Right lobe of liver (tissue), 6 donors: ENCODE measurements at regions of chr1 and their contacts with region 1.

Region 1: GRCh38 chr1:161229896-161230295 is 4.0 kb downstream of the TOMM40L start:
- DNase-seq: no peak
- ATAC-seq: no peak
- H3K4me3 ChIP-seq: no peak overlapping the region
- H3K27ac ChIP-seq: no peak overlapping the region
- H3K4me1 ChIP-seq: peaks cover 0 to 28% (median 5%) of the 10 kb centered on the region in 4 donors
- H3K27me3 ChIP-seq: no peaks in the 10 kb centered on the region
- CTCF ChIP-seq: no peak
- POLR2A ChIP-seq: no peak

Region 2: DNA sequence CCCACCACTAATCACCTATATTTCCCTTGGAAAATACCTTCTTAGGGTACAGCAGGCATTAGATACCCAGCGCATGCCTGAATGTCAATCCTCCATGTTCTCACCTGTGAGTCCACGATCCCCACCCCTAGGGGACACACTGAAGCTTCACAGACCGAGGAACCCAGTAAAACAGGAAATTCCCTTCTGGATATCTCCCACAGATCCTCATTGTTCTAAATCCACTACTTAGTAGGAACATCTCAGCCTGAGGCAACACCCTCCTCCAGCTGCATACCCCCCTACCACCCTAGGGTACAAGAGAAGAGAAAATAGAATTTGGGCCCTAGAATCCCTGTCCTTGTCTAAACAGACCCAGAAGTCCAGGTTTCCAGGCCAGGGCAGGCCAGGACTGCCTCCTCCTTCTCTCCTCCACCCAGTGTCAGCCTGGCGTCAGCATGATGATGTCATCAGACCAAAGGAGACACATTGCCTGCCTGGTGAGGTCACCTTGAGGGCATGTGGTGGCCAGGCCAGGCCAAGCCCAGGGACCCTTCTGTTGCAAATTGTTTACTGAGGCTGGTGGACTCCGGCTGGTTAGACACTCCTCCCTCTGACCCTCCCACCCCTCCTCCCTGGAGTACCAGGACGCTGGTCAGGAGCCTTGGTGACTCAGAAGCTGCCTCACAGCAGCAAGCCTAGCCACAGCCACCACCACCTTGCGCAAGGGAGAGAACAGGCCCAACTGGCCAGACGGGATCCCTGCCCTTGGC is 146.7 kb before region 1 on chr1:
- intact Hi-C with region 1: no loop called
- DNase-seq: peak in 1 of 3 donors; percentile 70
- ATAC-seq: peak; percentile 40 to 90 (median 60)
- H3K4me3 ChIP-seq: no peak overlapping the region
- H3K27ac ChIP-seq: no peak overlapping the region
- H3K4me1 ChIP-seq: no peaks in the 10 kb centered on the region
- H3K27me3 ChIP-seq: no peaks in the 10 kb centered on the region
- CTCF ChIP-seq: no peak
- POLR2A ChIP-seq: no peak

Region 3: DNA sequence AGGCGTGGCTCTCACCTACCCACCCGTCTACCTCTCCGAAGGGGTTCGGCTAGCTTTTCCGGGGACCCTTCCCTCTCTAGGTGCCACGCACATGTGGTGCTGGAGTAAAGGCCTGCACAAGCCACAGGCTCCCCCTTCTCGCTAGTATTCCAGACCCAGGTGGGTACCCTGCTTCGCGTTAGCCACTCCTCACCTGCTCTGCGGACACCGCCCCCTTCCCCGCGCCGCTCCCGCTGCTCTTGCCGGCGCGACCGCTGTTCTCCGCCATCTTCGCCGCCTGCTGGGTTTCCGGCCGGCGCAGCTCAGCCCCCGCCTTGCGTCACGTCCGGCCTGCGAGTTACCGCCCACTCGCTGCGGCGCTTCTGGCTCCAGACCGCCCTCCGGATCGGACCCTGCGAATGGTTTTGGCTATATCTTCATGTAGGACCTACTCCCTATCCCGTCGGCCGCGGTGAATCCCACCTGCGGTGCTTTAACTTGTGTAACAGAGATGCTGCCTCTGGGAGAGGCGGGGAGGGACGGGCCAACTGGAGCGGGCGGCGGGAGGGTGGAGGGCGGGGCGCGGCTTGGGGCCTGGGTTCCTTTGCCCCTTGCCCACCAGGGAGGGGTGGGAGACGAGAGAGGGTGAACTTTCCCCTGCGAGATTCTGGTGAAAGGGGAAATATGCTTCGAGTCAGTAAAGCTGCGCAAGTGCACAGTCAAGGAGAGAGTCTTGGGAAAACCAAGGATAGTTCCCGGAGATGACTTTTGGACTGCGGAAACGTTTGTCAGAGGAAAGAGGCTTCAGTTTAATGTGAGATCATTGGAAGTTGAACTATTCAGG is 111.9 kb before region 1 on chr1 and contains the starts of genes NIT1 and PFDN2:
- intact Hi-C with region 1: no loop called
- DNase-seq: peak; percentile 91 to 92 (median 91)
- ATAC-seq: peak; percentile 86 to 90 (median 88)
- H3K4me3 ChIP-seq: peak within 1 kb of the TSS; percentile 89 to 100 (median 99)
- H3K27ac ChIP-seq: peak within 1 kb of the TSS; percentile 88 to 95 (median 90)
- H3K4me1 ChIP-seq: peaks cover 0 to 50% (median 19%) of the 10 kb centered on the region in 4 donors
- H3K27me3 ChIP-seq: no peaks in the 10 kb centered on the region
- CTCF ChIP-seq: no peak
- POLR2A ChIP-seq: peak; percentile 96
- total RNA-seq, gene NIT1: 36.9 to 67.8 (median 45.8) TPM
- total RNA-seq, gene PFDN2: 16.6 to 37.5 (median 25.8) TPM

Region 4: GRCh38 chr1:161159087-161159912 is 70.6 kb before region 1 on chr1 and contains the start of gene USP21:
- intact Hi-C with region 1: no loop called
- DNase-seq: peak; percentile 94 to 96 (median 94)
- ATAC-seq: peak; percentile 96 to 98 (median 96)
- H3K4me3 ChIP-seq: peak within 1 kb of the TSS; percentile 84 to 93 (median 87)
- H3K27ac ChIP-seq: peak within 1 kb of the TSS; percentile 73 to 85 (median 78)
- H3K4me1 ChIP-seq: peaks cover 0 to 8% (median 0%) of the 10 kb centered on the region in 4 donors
- H3K27me3 ChIP-seq: no peaks in the 10 kb centered on the region
- CTCF ChIP-seq: peak in 2 of 4 donors; percentile 11 to 14
- POLR2A ChIP-seq: peak; percentile 55
- total RNA-seq, gene USP21: 6.9 to 11.1 (median 8.8) TPM

Region 5: DNA sequence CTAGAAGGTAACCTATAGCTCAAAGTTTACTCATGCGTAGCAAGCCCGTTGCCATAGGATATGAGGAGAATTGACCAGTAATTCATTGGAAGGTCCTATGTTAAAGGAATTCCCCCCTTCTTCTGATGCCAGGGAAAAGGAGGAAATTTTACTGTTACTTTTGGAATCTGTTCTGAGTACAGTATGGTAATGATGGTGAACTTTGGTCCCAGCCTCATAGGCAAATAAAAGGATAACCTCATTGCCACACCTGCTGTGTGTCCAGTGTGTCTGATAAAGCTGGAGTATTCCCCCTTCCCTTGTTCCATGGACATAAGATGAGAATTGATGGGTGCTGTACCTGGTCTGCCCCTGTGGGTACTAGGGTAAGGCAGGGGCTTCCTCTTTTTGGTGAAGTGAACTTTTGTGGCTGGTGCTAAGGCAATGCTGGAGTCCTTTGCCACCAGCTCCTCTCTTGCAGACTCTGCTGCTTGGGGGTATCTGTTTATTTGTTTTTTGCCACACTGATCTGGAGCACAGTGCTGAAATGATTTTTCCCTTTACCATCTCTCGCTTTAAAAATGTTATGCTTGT is 57.7 kb after region 1 on chr1:
- intact Hi-C with region 1: loop called (anchors 10 kb)
- DNase-seq: no peak
- ATAC-seq: peak in 1 of 4 donors; percentile 73
- H3K4me3 ChIP-seq: no peak overlapping the region
- H3K27ac ChIP-seq: no peak overlapping the region
- H3K4me1 ChIP-seq: no peaks in the 10 kb centered on the region
- H3K27me3 ChIP-seq: no peaks in the 10 kb centered on the region
- CTCF ChIP-seq: no peak
- POLR2A ChIP-seq: no peak

Region 6: DNA sequence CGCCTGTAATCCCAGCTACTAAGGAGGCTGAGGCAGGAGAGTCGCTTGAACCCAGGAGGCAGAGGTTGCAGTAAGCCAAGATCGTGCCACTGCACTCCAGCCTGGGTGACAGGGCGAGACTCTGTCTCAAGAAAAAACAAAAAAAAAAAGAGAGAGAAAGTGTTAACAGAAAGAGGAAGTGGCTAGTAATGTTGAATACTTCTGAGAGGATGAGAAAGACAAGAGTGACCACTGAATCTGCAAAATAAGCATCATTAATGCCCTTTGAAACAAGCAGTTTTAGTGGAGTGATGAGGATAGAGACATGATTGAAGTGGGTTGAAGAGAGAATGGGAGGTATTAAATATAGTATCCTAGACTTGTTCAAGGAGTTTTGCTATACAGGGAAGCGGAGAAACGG is 68.2 kb after region 1 on chr1:
- intact Hi-C with region 1: loop called in 1 of 2 experiments (anchors 10 kb)
- DNase-seq: no peak
- ATAC-seq: no peak
- H3K4me3 ChIP-seq: no peak overlapping the region
- H3K27ac ChIP-seq: no peak overlapping the region
- H3K4me1 ChIP-seq: no peaks in the 10 kb centered on the region
- H3K27me3 ChIP-seq: no peaks in the 10 kb centered on the region
- CTCF ChIP-seq: no peak
- POLR2A ChIP-seq: no peak